MCF 10A (cell line): ENCODE measurements at regions of chr16 and their contacts with region 1.

Region 1: DNA sequence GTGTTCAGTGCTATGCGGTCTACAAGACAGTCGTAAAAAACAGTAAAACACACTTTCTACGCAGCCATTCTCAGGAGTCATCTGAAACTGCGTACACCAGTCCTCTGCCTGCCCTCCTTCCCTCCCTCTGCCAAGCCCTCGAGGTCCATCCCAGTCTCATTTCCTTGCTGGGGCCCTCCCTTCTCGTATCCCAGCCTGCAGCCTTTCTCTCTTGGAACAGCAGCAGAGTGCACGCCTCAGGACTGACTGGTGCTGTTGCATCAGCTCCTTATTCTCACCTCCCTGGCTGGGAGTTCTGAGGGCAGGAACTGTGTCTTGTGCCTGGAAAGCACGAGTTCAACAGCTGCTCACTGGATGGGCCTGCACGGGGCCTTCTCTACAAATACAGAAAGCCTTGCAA is 12.5 kb downstream of the FAHD1 start:
- DNase-seq: no peak
- H3K4me3 Mint-ChIP-seq: no peak overlapping the region
- H3K27ac Mint-ChIP-seq: no peak overlapping the region
- H3K4me1 Mint-ChIP-seq: no peaks in the 10 kb centered on the region
- H3K27me3 Mint-ChIP-seq: no peaks in the 10 kb centered on the region
- CTCF ChIP-seq: no peak

Region 2: DNA sequence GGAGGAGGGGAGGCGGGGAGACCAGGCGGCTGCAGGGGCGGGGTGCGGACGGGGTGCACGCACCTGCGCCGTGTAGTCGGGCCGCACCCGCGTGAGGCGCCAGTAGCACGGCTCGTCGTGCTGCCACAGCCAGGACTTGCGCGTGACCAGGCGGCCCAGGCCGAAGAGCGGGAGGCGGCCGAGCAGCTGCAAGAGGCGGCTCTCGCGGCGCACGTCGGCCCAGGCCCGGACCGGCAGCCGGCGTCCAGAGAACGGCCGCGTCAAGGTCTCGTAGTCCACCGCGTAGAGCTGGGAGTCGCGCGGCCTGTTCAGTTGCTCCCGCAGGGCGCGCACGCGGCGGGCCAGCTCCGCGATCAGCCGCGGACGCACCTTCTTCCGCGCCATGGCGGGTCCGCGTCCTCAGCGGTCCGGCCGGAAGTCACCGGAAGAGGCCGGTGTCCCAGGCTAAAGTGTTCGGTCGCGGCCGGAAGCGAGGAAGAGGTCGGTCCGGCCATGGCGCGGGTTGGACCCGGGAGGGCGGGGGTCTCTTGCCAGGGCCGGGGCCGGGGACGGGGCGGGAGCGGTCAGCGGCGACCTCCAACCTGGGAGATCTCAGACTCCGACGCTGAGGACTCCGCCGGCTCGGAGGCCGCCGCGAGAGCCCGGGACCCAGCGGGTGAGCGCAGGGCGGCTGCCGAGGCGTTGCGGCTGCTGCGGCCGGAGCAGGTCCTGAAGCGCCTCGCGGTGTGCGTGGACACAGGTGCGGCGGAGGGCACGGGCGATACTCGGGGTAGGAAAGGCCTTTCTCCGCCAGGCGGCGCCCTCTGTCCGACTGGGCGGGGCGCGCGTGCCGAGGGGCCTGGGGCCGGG is 66.6 kb before region 1 on chr16 and contains the starts of genes EME2 and MRPS34:
- CTCF ChIA-PET with region 1: no interaction called
- POLR2A ChIA-PET with region 1: no interaction called
- intact Hi-C with region 1: no loop called
- DNase-seq: peak; percentile 84
- H3K4me3 Mint-ChIP-seq: peak within 1 kb of the TSS; percentile 80
- H3K27ac Mint-ChIP-seq: peak within 1 kb of the TSS; percentile 80
- H3K4me1 Mint-ChIP-seq: peaks cover 7% of the 10 kb centered on the region
- H3K27me3 Mint-ChIP-seq: no peaks in the 10 kb centered on the region
- CTCF ChIP-seq: peak; percentile 92
- total RNA-seq, gene EME2: 20.6 TPM in 2 replicates
- total RNA-seq, gene MRPS34: 82.2 and 102 TPM in 2 replicates

Region 3: GRCh38 chr16:1794221-1794860 is 45.2 kb before region 1 on chr16:
- CTCF ChIA-PET with region 1: no interaction called
- POLR2A ChIA-PET with region 1: no interaction called
- intact Hi-C with region 1: no loop called
- DNase-seq: no peak
- H3K4me3 Mint-ChIP-seq: no peak overlapping the region
- H3K27ac Mint-ChIP-seq: no peak overlapping the region
- H3K4me1 Mint-ChIP-seq: no peaks in the 10 kb centered on the region
- H3K27me3 Mint-ChIP-seq: no peaks in the 10 kb centered on the region
- CTCF ChIP-seq: no peak

Region 4: DNA sequence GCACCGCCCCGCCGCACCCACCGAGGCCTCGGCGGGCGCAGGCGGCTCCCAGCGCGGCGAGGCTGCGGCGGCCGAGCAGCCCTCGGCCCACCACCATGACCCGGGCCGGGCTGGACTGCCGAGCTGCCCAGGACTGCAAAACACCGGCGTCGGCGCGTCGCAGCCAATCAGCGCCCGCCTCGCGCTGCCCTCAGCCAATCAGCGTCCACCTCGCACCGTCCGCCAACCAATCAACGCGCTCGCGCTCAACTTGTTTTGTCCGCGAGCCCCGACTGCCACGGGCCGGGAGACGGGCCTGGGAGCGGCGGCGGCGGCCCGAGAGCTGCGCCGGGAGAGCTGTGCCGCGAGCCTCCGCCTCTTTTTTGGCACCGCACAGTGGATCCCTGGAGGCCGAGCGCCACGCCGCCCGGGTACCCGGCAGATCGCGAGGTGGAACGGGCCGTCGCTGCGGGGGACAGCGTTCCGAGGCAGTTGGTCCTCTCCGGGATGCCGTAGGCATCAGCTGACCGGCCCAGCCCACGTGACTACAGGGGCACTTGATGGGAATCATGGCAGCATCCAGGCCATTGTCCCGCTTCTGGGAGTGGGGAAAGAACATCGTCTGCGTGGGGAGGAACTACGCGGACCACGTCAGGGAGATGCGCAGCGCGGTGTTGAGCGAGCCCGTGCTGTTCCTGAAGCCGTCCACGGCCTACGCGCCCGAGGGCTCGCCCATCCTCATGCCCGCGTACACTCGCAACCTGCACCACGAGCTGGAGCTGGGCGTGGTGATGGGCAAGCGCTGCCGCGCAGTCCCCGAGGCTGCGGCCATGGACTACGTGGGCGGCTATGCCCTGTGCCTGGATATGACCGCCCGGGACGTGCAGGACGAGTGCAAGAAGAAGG is 12.6 kb before region 1 on chr16 and contains the starts of genes FAHD1 and HAGH:
- CTCF ChIA-PET with region 1: no interaction called
- POLR2A ChIA-PET with region 1: interaction called, 33 read pairs
- intact Hi-C with region 1: no loop called
- DNase-seq: peak; percentile 89
- H3K4me3 Mint-ChIP-seq: peak within 1 kb of the TSS; percentile 94
- H3K27ac Mint-ChIP-seq: peak within 1 kb of the TSS; percentile 92
- H3K4me1 Mint-ChIP-seq: peaks cover 7% of the 10 kb centered on the region
- H3K27me3 Mint-ChIP-seq: no peaks in the 10 kb centered on the region
- CTCF ChIP-seq: no peak
- total RNA-seq, gene FAHD1: 18.4 and 21.4 TPM in 2 replicates
- total RNA-seq, gene HAGH: 44.5 and 69.8 TPM in 2 replicates